ENCODE measurements at regions of chr13 and their contacts with region 1.

Region 1: DNA sequence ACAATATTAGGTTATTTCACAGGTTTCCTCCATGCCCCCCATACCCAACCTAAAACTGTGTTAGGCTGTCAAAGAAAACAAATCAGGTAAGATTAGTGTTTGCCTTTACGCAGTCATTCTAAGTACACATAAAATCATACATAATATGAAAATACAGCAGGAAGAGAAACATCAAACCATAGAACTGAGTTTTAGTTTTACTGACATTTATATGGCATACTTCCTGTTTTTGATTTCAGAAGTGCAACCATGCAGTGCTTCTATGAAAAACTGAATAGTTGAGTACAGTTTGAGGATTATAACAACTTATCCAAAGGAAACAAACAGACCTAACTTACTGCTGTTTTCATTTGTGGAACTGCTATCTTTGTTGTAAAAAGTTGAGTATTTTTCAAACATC is 91.3 kb downstream of the KCNRG start:
- DNase-seq: peak in 1 of 9 experiments; percentile 28
- ATAC-seq: peak; percentile 44
- H3K4me3 ChIP-seq: no peak overlapping the region
- H3K4me3 Mint-ChIP-seq: peak overlapping the region; percentile 51
- H3K27ac ChIP-seq: peak overlapping the region in 1 of 2 experiments; percentile 48
- H3K27ac Mint-ChIP-seq: peak overlapping the region; percentile 91
- H3K4me1 ChIP-seq: peaks cover 19% of the 10 kb centered on the region
- H3K4me1 Mint-ChIP-seq: peaks cover 50% of the 10 kb centered on the region
- H3K27me3 ChIP-seq: no peaks in the 10 kb centered on the region
- H3K27me3 Mint-ChIP-seq: no peaks in the 10 kb centered on the region
- CTCF ChIP-seq: no peak

Region 2: GRCh38 chr13:50094615-50095293 is 11.8 kb before region 1 on chr13:
- CTCF ChIA-PET with region 1: no interaction called
- POLR2A ChIA-PET with region 1: interaction called, 3 read pairs
- intact Hi-C with region 1: loop called in 1 of 2 experiments (anchors 2 kb)
- DNase-seq: no peak
- ATAC-seq: no peak
- H3K4me3 ChIP-seq: no peak overlapping the region
- H3K4me3 Mint-ChIP-seq: no peak overlapping the region
- H3K27ac ChIP-seq: no peak overlapping the region
- H3K27ac Mint-ChIP-seq: no peak overlapping the region
- H3K4me1 ChIP-seq: no peaks in the 10 kb centered on the region
- H3K4me1 Mint-ChIP-seq: peaks cover 15% of the 10 kb centered on the region
- H3K27me3 ChIP-seq: no peaks in the 10 kb centered on the region
- H3K27me3 Mint-ChIP-seq: no peaks in the 10 kb centered on the region
- CTCF ChIP-seq: no peak